Sigmoid colon (tissue), 7 donors: ENCODE measurements at regions of chr3 and their contacts with region 1.

Region 1: GRCh38 chr3:107574650-107575049 is 51.9 kb downstream of the BBX start:
- DNase-seq: no peak
- H3K4me3 ChIP-seq: no peak overlapping the region
- H3K27ac ChIP-seq: no peak overlapping the region
- H3K4me1 ChIP-seq: no peaks in the 10 kb centered on the region
- H3K27me3 ChIP-seq: no peaks in the 10 kb centered on the region
- CTCF ChIP-seq: peak in 2 of 4 experiments; percentile 22 to 42
- EP300 ChIP-seq: no peak
- POLR2A ChIP-seq: no peak

Region 2: DNA sequence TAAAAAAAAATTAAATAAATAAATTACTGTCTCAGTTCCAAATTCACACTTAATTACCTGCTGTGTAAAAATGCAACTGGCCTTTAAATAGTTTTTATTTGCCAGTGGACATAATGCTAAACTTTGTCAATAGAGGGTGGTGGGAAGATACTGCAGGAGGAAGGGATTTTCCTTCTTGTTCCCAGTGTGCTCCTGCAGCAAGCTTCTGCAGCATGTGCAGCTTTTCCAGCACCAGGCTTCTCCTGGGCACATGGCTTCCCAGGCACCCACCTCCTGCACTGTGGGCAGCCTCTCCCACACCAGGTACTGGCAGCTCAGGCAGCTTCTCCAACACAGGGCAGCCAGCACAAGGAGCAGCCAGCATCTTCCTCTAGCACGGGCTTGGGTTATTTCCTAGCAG is 81.5 kb before region 1 on chr3:
- intact Hi-C with region 1: no loop called
- DNase-seq: no peak
- H3K4me3 ChIP-seq: no peak overlapping the region
- H3K27ac ChIP-seq: no peak overlapping the region
- H3K4me1 ChIP-seq: no peaks in the 10 kb centered on the region
- H3K27me3 ChIP-seq: no peaks in the 10 kb centered on the region
- CTCF ChIP-seq: no peak
- EP300 ChIP-seq: no peak
- POLR2A ChIP-seq: no peak

Region 3: DNA sequence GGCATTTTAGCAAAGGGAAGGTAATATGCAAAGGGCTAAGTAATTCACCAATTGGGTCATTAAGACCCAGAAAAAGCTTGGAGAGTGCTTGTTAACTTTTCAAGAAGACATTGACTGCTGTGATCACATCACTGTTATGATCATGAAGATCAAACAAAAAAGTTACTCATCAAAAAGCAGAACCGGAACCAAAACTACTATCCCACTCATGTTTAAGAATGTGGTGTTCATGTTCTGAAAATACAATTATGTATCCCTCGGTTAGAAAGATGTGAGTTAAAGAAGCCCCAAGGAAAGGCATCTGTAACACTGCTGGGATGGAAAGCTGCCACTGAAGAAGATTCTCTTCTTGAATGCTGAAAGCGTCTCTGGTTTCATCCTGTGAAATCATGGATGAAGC is 19.3 kb before region 1 on chr3:
- intact Hi-C with region 1: loop called (anchors 1 kb)
- DNase-seq: no peak
- H3K4me3 ChIP-seq: no peak overlapping the region
- H3K27ac ChIP-seq: no peak overlapping the region
- H3K4me1 ChIP-seq: peaks cover 0 to 11% (median 4%) of the 10 kb centered on the region in 4 donors
- H3K27me3 ChIP-seq: no peaks in the 10 kb centered on the region
- CTCF ChIP-seq: no peak
- EP300 ChIP-seq: no peak
- POLR2A ChIP-seq: no peak

Region 4: GRCh38 chr3:107676469-107677309 is 102.0 kb after region 1 on chr3:
- intact Hi-C with region 1: loop called (anchors 10 kb)
- DNase-seq: no peak
- H3K4me3 ChIP-seq: no peak overlapping the region
- H3K27ac ChIP-seq: no peak overlapping the region
- H3K4me1 ChIP-seq: peaks cover 0 to 56% (median 36%) of the 10 kb centered on the region in 4 donors
- H3K27me3 ChIP-seq: no peaks in the 10 kb centered on the region
- CTCF ChIP-seq: peak in 3 of 4 experiments; percentile 28 to 54 (median 47)
- EP300 ChIP-seq: no peak
- POLR2A ChIP-seq: no peak

Region 5: GRCh38 chr3:108053067-108053466 is 478.4 kb after region 1 on chr3:
- intact Hi-C with region 1: no loop called
- DNase-seq: no peak
- H3K4me3 ChIP-seq: no peak overlapping the region
- H3K27ac ChIP-seq: no peak overlapping the region
- H3K4me1 ChIP-seq: peaks cover 0 to 9% (median 7%) of the 10 kb centered on the region in 4 donors
- H3K27me3 ChIP-seq: no peaks in the 10 kb centered on the region
- CTCF ChIP-seq: no peak
- EP300 ChIP-seq: no peak
- POLR2A ChIP-seq: no peak